Activated T-helper 2 cell treated with anti-CD3 and anti-CD28 coated beads, Interferon-gamma antibody, Interleukin-2, Interleukin-4, amounts not matched to agents 10 μg/mL and 5 μg/mL and 100 μg/mL, durations not matched to agents 14 hours and 24 hours and 36 hours (primary cell): ENCODE measurements at regions of chr10 and their contacts with region 1.

Region 1: GRCh38 chr10:62732841-62733653 is 71.5 kb upstream of the ADO start:
- DNase-seq: peak; percentile 51
- H3K4me3 Mint-ChIP-seq: peak overlapping the region; percentile 56
- H3K27ac Mint-ChIP-seq: no peak overlapping the region
- H3K4me1 Mint-ChIP-seq: peaks cover 23% of the 10 kb centered on the region
- H3K27me3 Mint-ChIP-seq: no peaks in the 10 kb centered on the region

Region 2: DNA sequence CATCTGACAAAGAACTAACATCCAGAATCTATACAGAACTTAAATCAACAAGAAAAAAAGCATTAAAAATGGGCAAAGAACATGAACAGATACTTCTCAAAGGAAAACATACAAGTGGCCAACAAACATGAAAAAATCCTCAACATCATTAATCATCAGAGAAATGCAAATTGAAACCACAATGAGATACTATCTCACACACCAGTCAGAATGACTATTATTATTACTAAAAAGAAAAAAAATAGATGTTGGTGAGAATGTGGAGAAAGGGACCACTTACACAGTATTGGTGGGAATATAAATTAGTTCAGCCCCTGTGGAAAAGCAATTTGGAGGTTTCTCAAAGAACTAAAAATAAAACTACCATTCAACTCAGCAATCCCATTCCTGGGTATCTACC is 17.7 kb before region 1 on chr10:
- intact Hi-C with region 1: loop called (anchors 2 kb)
- DNase-seq: no peak
- H3K4me3 Mint-ChIP-seq: no peak overlapping the region
- H3K27ac Mint-ChIP-seq: no peak overlapping the region
- H3K4me1 Mint-ChIP-seq: peaks cover 12% of the 10 kb centered on the region
- H3K27me3 Mint-ChIP-seq: no peaks in the 10 kb centered on the region

Region 3: DNA sequence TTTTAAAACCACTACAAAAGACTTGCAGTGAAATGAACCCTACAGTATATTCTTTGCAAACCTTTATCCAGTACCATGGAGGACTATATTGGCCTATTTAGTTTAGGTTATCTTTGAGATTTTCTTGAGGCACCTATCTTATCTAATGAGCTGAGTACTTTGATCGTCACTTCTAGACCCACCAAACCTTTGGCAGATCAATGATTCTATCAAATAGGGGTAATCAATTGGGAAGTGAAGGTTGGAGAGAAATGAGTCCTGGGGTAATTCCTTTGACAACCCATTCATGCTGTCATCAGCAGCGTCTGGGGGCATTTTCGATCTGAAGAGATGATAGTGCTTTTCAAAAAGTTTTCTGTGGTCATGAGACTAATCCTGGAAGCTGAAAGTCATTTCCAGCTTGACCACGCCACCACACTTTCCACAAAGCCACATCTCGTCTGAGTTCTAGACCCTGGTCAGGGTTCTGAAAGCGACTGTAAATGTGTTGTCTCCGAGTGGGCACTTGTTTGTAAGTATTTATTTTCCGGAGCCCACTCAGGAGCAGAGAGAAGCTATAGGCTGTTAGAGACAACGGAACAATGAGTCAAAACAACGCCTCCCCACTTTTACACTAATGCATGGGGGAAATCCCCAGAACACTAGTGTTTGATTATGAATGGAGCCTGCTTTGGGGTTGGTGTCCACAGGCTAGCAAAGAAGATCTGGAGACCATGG is 78.3 kb after region 1 on chr10:
- intact Hi-C with region 1: loop called (anchors 1 kb)
- DNase-seq: peak; percentile 58
- H3K4me3 Mint-ChIP-seq: peak overlapping the region; percentile 97
- H3K27ac Mint-ChIP-seq: peak overlapping the region; percentile 83
- H3K4me1 Mint-ChIP-seq: peaks cover 67% of the 10 kb centered on the region
- H3K27me3 Mint-ChIP-seq: peaks cover 2% of the 10 kb centered on the region

Region 4: GRCh38 chr10:63068246-63068645 is 335.2 kb after region 1 on chr10:
- intact Hi-C with region 1: loop called (anchors 5 kb)
- DNase-seq: no peak
- H3K4me3 Mint-ChIP-seq: no peak overlapping the region
- H3K27ac Mint-ChIP-seq: peak overlapping the region; percentile 75
- H3K4me1 Mint-ChIP-seq: peaks cover 51% of the 10 kb centered on the region
- H3K27me3 Mint-ChIP-seq: peaks cover 3% of the 10 kb centered on the region